CD4-positive, alpha-beta T cell (primary cell): ENCODE measurements at regions of chr3 and their contacts with region 1.

Region 1: GRCh38 chr3:143124601-143125520 is 5.3 kb downstream of the CHST2 start:
- DNase-seq: peak in 1 of 14 experiments; percentile 13
- ATAC-seq: no peak
- H3K4me3 ChIP-seq: no peak overlapping the region
- H3K4me3 Mint-ChIP-seq: peak overlapping the region; percentile 86
- H3K27ac ChIP-seq: peak overlapping the region in 1 of 2 donors; percentile 17
- H3K27ac Mint-ChIP-seq: peak overlapping the region; percentile 86
- H3K4me1 ChIP-seq: peaks cover 30% of the 10 kb centered on the region
- H3K4me1 Mint-ChIP-seq: peaks cover 62% of the 10 kb centered on the region
- H3K27me3 ChIP-seq: peaks cover 0 to 3% of the 10 kb centered on the region in 2 experiments
- H3K27me3 Mint-ChIP-seq: no peaks in the 10 kb centered on the region
- CTCF ChIP-seq: no peak

Region 2: DNA sequence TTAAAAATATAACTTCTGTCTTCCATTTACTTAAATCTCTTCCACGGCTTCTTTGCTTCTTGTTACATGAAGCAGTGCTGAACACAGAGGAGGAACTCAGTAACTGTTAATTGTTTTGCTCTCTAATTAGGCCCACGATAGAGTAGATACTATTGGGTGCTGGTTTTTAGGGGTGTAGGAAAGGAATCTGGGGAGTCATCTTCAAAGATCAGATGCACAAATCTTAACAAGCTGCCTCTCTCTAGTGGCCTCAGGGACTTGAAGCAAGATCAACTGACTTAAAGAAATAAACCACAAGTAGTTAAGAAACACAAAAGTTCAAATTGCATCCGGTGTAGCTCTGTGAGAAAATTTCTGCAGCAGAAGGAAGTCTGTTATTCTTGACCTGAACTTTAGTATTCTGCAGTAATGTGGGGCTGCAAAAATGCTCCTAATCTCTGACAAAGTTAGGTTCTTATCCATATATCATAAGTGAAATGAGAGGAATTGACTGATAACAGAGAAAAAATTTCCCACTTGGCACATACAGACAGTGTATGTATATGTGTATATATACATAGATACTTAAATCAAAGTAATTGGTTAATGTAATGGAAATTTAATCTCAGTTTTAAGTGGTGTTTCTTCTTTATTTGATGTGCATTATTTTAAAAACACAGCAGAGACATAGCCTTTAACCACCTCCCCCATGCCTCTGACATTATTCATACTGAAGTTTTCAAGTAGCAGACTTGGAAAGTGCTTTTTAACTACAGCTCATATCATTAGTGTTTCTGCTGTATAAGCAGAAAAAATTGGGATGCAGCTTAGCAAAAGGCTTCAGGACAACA is 46.5 kb after region 1 on chr3:
- CTCF ChIA-PET with region 1: interaction called, 3 read pairs
- POLR2A ChIA-PET with region 1: interaction called, 12 read pairs
- intact Hi-C with region 1: loop called (anchors 2 to 5 kb)
- DNase-seq: peak in 4 of 14 experiments; percentile 38 to 64 (median 42)
- ATAC-seq: peak; percentile 63
- H3K4me3 ChIP-seq: no peak overlapping the region
- H3K4me3 Mint-ChIP-seq: peak overlapping the region; percentile 71
- H3K27ac ChIP-seq: peak overlapping the region; percentile 46 to 61
- H3K27ac Mint-ChIP-seq: peak overlapping the region; percentile 85
- H3K4me1 ChIP-seq: peaks cover 41% of the 10 kb centered on the region
- H3K4me1 Mint-ChIP-seq: peaks cover 80% of the 10 kb centered on the region
- H3K27me3 ChIP-seq: no peaks in the 10 kb centered on the region
- H3K27me3 Mint-ChIP-seq: no peaks in the 10 kb centered on the region
- CTCF ChIP-seq: no peak

Region 3: DNA sequence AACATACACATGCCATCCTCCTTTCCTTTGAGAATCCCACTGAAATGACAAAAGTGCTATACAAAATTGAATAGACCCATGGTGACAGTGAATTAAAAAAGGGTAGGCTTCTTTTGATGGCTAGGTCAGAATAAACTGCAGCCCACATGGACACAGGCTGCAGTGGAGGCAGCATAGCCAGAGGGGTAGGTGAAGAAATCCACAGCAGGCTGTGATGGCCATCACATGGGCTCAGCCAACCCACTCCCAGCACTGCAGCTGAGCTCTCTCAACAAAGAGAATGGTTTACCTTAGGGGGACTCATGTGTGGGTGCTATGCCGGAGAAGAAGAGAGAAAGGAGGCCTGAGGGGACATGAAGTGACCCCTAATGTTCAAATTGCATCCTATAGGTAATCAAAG is 325.8 kb after region 1 on chr3:
- CTCF ChIA-PET with region 1: no interaction called
- POLR2A ChIA-PET with region 1: interaction called, 6 read pairs
- intact Hi-C with region 1: loop called in 1 of 2 experiments (anchors 2 kb)
- DNase-seq: no peak
- ATAC-seq: peak; percentile 26
- H3K4me3 ChIP-seq: no peak overlapping the region
- H3K4me3 Mint-ChIP-seq: no peak overlapping the region
- H3K27ac ChIP-seq: no peak overlapping the region
- H3K27ac Mint-ChIP-seq: no peak overlapping the region
- H3K4me1 ChIP-seq: no peaks in the 10 kb centered on the region
- H3K4me1 Mint-ChIP-seq: peaks cover 2% of the 10 kb centered on the region
- H3K27me3 ChIP-seq: no peaks in the 10 kb centered on the region
- H3K27me3 Mint-ChIP-seq: no peaks in the 10 kb centered on the region
- CTCF ChIP-seq: no peak